ENCODE measurements at regions of chr1 and their contacts with region 1.

Region 1: DNA sequence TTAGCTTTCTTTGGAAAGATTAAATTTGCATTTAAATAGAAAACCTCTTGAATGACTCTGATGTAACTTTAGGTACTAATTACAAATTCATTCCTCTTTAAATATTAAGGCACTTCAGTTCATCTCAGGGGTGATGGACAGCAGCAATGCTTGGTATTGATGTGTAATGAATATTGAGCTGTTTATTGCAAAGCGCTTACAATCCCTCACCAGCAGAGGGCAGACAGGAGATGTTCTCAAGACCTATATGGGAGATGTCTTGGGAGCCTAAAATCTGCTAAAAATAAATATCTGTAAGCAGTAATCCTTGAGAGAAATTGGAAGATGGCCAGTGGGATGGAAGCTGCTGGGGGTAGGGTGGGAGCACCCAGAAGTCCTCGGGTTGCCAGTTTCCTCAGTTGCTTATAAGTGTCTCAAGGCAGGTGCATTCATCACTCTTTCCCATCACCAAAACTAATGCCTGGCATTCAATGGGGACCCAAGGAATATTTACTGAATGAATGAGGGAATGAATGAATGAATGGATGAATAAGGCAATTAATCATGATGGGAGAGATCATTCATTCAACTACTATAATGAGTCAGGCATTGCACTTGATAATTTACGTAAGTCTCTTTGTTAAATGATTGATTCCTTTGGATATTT is 2.3 kb downstream of the KLHDC8A start:
- DNase-seq: peak; percentile 56
- H3K4me3 ChIP-seq: no peak overlapping the region
- H3K27ac ChIP-seq: no peak overlapping the region
- H3K4me1 ChIP-seq: peaks cover 0 to 8% of the 10 kb centered on the region in 2 experiments; a peak in 1 of 4 replicates
- H3K27me3 ChIP-seq: no peaks in the 10 kb centered on the region; the same call in 1 of the 2 replicates
- CTCF ChIP-seq: peak; percentile 96
- EP300 ChIP-seq: no peak
- RAD21 ChIP-seq: peak; percentile 67

Region 2: DNA sequence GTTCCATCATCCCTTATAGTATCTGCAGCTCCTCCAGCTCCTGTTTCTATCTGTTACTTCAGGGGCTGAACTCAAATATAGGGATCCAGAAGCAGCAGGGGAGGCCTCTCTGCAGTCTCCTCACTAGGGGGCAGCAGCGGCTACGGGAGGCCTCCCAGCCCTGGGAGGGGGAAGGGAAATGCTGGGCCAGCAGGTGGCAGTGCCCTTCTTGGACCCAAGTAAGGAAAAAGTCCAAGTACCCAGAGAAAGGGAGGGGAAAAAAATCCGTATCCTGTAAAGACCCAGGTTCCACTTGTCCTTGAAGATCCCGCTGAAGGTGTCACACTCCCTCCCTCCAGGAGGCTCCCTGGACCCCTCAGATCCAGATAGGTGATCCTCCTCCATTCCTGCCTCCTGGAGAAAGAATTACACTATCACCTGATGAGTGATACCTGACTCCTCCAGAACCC is 18.7 kb before region 1 on chr1:
- CTCF ChIA-PET with region 1: interaction called, 91 read pairs
- POLR2A ChIA-PET with region 1: no interaction called
- DNase-seq: peak; percentile 90
- H3K4me3 ChIP-seq: peak overlapping the region in 1 of 2 experiments; percentile 42; a peak in 1 of 4 replicates
- H3K27ac ChIP-seq: no peak overlapping the region
- H3K4me1 ChIP-seq: no peaks in the 10 kb centered on the region
- H3K27me3 ChIP-seq: no peaks in the 10 kb centered on the region; the same call in 1 of the 2 replicates
- CTCF ChIP-seq: peak; percentile 98
- EP300 ChIP-seq: no peak
- RAD21 ChIP-seq: peak; percentile 79

Region 3: GRCh38 chr1:205365945-205366463 is 11.6 kb after region 1 on chr1:
- CTCF ChIA-PET with region 1: interaction called, 34 read pairs
- POLR2A ChIA-PET with region 1: no interaction called
- DNase-seq: no peak
- H3K4me3 ChIP-seq: no peak overlapping the region
- H3K27ac ChIP-seq: no peak overlapping the region
- H3K4me1 ChIP-seq: no peaks in the 10 kb centered on the region; a peak in 1 of 4 replicates
- H3K27me3 ChIP-seq: peaks cover 1% of the 10 kb centered on the region; the same call in 1 of the 2 replicates
- CTCF ChIP-seq: no peak
- EP300 ChIP-seq: no peak
- RAD21 ChIP-seq: no peak

Region 4: GRCh38 chr1:205382561-205382960 is 28.2 kb after region 1 on chr1:
- CTCF ChIA-PET with region 1: interaction called, 13 read pairs
- POLR2A ChIA-PET with region 1: no interaction called
- DNase-seq: no peak
- H3K4me3 ChIP-seq: no peak overlapping the region
- H3K27ac ChIP-seq: no peak overlapping the region
- H3K4me1 ChIP-seq: no peaks in the 10 kb centered on the region
- H3K27me3 ChIP-seq: no peaks in the 10 kb centered on the region
- CTCF ChIP-seq: no peak
- EP300 ChIP-seq: no peak
- RAD21 ChIP-seq: no peak

Region 5: DNA sequence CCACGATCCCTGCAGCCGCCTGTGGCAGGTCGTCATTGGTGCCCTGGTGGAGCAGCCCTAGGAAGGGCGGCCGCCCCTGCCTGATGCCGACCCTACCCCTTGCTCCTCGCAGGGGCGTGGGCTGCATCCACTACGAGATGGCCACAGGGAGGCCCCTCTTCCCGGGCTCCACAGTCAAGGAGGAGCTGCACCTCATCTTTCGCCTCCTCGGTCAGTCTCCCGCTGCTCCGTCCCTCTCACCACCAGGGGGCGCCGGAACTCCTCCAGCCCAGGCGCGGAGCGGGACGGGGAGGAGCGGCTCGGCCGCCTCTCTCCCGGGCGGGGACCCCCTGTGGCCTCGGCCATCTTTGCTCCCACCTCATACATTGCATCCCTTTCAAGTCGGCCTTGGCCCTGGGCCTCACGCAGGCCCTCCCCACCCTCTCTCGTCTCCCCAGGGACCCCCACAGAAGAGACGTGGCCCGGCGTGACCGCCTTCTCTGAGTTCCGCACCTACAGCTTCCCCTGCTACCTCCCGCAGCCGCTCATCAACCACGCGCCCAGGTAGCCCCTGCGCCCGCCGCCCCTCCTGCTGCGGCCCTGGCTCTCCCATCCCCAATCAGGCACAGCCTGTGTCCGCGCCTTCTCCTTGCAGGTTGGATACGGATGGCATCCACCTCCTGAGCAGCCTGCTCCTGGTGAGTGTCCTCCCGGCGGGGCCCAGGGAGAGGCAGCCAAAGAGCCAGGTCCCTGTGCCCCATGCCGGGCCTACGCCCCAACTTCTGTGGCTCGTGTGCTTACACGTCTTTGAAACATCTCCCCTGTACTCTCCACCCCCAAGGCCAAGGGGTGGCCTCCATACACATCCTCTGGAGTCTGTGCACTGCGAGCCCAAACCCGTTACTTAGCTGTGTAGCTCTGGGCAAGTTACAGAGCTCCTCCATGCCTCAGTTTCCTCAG is 174.8 kb after region 1 on chr1:
- CTCF ChIA-PET with region 1: interaction called, 58 read pairs
- POLR2A ChIA-PET with region 1: no interaction called
- DNase-seq: peak; percentile 97
- H3K4me3 ChIP-seq: peak overlapping the region; percentile 40 to 59
- H3K27ac ChIP-seq: no peak overlapping the region
- H3K4me1 ChIP-seq: peaks cover 0 to 21% of the 10 kb centered on the region in 2 experiments; a peak in 1 of 4 replicates
- H3K27me3 ChIP-seq: no peaks in the 10 kb centered on the region
- CTCF ChIP-seq: peak; percentile 90
- EP300 ChIP-seq: no peak
- RAD21 ChIP-seq: peak; percentile 83

Measured in SK-N-SH (cell line).